Gastrocnemius medialis (tissue), 4 donors: ENCODE measurements at regions of chr4 and their contacts with region 1.

Region 1: GRCh38 chr4:13484122-13484748 is at the start of gene RAB28:
- DNase-seq: peak; percentile 88 to 90
- ATAC-seq: peak; percentile 96
- H3K4me3 ChIP-seq: peak within 1 kb of the TSS; percentile 83 to 98 (median 87)
- H3K27ac ChIP-seq: peak within 1 kb of the TSS; percentile 86 to 94 (median 92)
- H3K4me1 ChIP-seq: peaks cover 16 to 23% of the 10 kb centered on the region in 2 donors
- H3K27me3 ChIP-seq: peaks cover 0 to 9% (median 0%) of the 10 kb centered on the region in 3 donors
- CTCF ChIP-seq: no peak
- POLR2A ChIP-seq: peak; percentile 59 to 67
- total RNA-seq, gene RAB28: 3.9 to 8.0 (median 6.7) TPM

Region 2: DNA sequence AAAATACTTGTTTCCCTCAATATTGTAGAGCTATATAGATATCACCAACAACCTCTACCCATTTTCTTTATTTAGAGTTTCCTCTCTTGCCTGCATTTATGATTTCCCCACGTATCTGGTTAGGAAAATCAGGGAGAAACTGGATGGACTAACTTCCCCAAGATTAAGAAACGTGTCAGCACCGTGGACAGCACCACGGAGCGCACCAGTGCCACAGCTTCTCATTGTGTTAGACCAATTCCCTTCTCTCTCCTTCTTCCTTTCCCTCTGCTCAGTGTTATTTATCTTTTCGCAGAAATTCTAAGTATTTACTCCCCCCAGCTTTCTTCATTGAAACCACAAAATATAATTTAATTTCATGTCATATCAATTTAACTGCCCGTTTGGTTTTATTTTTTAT is 711.9 kb after region 1 on chr4:
- in situ Hi-C with region 1: no loop called
- intact Hi-C with region 1: no loop called
- DNase-seq: no peak
- ATAC-seq: no peak
- H3K4me3 ChIP-seq: no peak overlapping the region
- H3K27ac ChIP-seq: no peak overlapping the region
- H3K4me1 ChIP-seq: no peaks in the 10 kb centered on the region
- H3K27me3 ChIP-seq: no peaks in the 10 kb centered on the region
- CTCF ChIP-seq: no peak
- POLR2A ChIP-seq: no peak

Region 3: DNA sequence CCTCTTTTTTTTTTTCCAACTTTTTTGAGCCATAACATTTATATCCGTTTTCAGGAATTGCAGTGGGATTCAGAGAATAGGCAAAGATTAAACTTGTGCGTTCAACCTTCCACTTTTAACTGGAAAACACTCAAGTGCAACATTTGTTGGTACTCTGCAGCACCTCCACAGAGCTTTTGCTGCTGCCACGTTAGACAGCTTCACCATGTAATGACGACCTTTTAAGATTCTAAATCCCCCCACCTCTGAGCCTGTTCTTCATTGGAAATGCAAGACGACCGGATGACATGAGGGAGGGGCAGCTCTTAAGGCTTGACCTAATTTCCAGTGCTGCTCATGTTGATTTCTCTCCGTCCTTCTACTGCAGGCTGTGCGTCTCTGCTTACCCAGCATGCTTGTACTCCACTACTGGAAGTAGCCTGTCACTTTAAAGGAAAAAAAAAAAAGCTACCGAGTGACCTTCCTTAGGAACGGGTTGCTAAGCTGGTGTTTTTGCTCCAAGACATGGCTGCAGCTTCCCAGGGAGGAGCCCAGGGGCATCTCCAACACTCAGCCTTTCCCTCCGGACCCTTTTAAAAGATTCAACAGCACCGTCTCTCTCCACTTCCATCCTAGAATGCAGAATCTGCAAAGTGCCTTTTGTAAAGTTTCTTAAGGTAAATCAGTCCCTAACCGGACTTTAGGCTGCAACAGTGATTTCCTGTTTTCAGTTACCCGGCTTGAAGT is 1985.3 kb after region 1 on chr4 and contains the start of gene CC2D2A:
- in situ Hi-C with region 1: no loop called
- intact Hi-C with region 1: loop called (anchors 5 kb)
- DNase-seq: peak in 1 of 2 donors; percentile 12
- ATAC-seq: peak; percentile 64 to 82
- H3K4me3 ChIP-seq: peak within 1 kb of the TSS; percentile 50 to 67 (median 62)
- H3K27ac ChIP-seq: peak within 1 kb of the TSS in 3 of 4 donors; percentile 2 to 32 (median 24)
- H3K4me1 ChIP-seq: peaks cover 26 to 29% of the 10 kb centered on the region in 2 donors
- H3K27me3 ChIP-seq: no peaks in the 10 kb centered on the region
- CTCF ChIP-seq: no peak
- POLR2A ChIP-seq: no peak
- total RNA-seq, gene CC2D2A: 1.1 to 4.0 (median 2.9) TPM